CD4-positive, alpha-beta T cell (primary cell): ENCODE measurements at regions of chr3 and their contacts with region 1.

Region 1: GRCh38 chr3:49802719-49803464 is at the start of gene INKA1:
- DNase-seq: peak; percentile 82 to 95 (median 84)
- ATAC-seq: peak; percentile 88
- H3K4me3 ChIP-seq: peak within 1 kb of the TSS; percentile 85
- H3K4me3 Mint-ChIP-seq: peak within 1 kb of the TSS; percentile 90
- H3K27ac ChIP-seq: peak within 1 kb of the TSS; percentile 69 to 74
- H3K27ac Mint-ChIP-seq: peak within 1 kb of the TSS; percentile 80
- H3K4me1 ChIP-seq: peaks cover 51% of the 10 kb centered on the region
- H3K4me1 Mint-ChIP-seq: peaks cover 45% of the 10 kb centered on the region
- H3K27me3 ChIP-seq: no peaks in the 10 kb centered on the region
- H3K27me3 Mint-ChIP-seq: peaks cover 4% of the 10 kb centered on the region
- CTCF ChIP-seq: peak; percentile 87
- total RNA-seq, gene INKA1: 0.85 to 0.87 TPM

Region 2: DNA sequence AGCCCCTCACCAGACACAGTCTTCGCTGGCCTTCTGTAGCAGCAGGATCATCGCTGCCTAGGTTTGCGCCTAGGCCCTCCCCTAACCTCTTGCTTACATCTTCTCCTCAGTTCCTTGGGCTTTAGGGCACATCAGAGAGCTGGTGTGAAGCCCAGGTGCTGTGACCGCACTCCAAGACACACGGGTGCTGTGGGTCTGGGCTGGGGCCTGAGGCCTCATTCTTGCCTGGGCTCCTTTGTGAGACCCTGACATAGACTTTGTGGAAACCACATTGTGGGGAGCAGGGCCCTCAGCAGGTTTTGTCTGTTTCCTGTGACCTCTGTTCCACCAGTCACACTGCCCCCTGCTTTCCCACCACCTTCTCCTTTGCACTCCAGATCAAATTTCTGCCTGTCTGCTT is 91.4 kb before region 1 on chr3:
- CTCF ChIA-PET with region 1: no interaction called
- POLR2A ChIA-PET with region 1: no interaction called
- intact Hi-C with region 1: no loop called
- DNase-seq: no peak
- ATAC-seq: no peak
- H3K4me3 ChIP-seq: no peak overlapping the region
- H3K4me3 Mint-ChIP-seq: no peak overlapping the region
- H3K27ac ChIP-seq: no peak overlapping the region
- H3K27ac Mint-ChIP-seq: peak overlapping the region; percentile 35
- H3K4me1 ChIP-seq: peaks cover 12% of the 10 kb centered on the region
- H3K4me1 Mint-ChIP-seq: no peaks in the 10 kb centered on the region
- H3K27me3 ChIP-seq: no peaks in the 10 kb centered on the region
- H3K27me3 Mint-ChIP-seq: no peaks in the 10 kb centered on the region
- CTCF ChIP-seq: no peak

Region 3: DNA sequence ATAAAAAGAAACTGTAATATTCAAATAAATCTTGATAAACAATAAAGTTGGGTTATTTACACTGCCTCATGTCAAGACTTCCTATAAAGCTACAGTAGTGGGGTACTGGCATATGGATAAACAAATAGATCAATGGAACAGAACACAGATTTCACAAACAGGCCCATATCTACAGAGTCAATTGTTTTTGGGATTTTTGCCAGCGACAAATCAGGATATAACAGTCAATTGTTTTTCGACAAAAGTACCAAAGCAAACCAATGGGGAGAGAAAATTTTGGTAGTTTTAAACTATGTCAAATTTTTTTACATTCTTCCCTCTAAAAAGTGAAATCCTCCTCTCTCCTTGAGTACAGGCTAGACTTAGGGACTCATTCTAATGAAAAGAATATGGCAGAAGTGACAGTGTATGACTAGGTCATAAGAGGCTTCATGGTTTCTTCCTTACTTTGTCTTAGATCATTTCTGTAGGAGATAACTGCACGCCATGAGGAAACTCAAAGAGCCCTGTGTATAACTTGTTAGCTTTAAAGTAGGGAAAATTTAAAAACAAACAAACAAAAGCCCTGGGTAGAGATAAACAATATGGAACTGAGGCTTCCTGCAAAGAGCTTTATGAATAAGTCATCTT is 33.5 kb before region 1 on chr3:
- CTCF ChIA-PET with region 1: interaction called, 13 read pairs
- POLR2A ChIA-PET with region 1: interaction called, 3 read pairs
- intact Hi-C with region 1: no loop called
- DNase-seq: no peak
- ATAC-seq: no peak
- H3K4me3 ChIP-seq: no peak overlapping the region
- H3K4me3 Mint-ChIP-seq: no peak overlapping the region
- H3K27ac ChIP-seq: no peak overlapping the region
- H3K27ac Mint-ChIP-seq: no peak overlapping the region
- H3K4me1 ChIP-seq: peaks cover 7% of the 10 kb centered on the region
- H3K4me1 Mint-ChIP-seq: peaks cover 38% of the 10 kb centered on the region
- H3K27me3 ChIP-seq: no peaks in the 10 kb centered on the region
- H3K27me3 Mint-ChIP-seq: no peaks in the 10 kb centered on the region
- CTCF ChIP-seq: no peak

Region 4: GRCh38 chr3:49813497-49814174 is 10.7 kb after region 1 on chr3 and contains the start of gene UBA7:
- CTCF ChIA-PET with region 1: interaction called, 42 read pairs
- POLR2A ChIA-PET with region 1: interaction called, 83 read pairs
- intact Hi-C with region 1: loop called in 1 of 2 experiments (anchors 1 kb)
- DNase-seq: peak in 9 of 14 experiments; percentile 11 to 76 (median 52)
- ATAC-seq: peak; percentile 88
- H3K4me3 ChIP-seq: peak within 1 kb of the TSS; percentile 77
- H3K4me3 Mint-ChIP-seq: peak within 1 kb of the TSS; percentile 97
- H3K27ac ChIP-seq: peak within 1 kb of the TSS; percentile 41 to 71
- H3K27ac Mint-ChIP-seq: peak within 1 kb of the TSS; percentile 97
- H3K4me1 ChIP-seq: peaks cover 37% of the 10 kb centered on the region
- H3K4me1 Mint-ChIP-seq: peaks cover 36% of the 10 kb centered on the region
- H3K27me3 ChIP-seq: no peaks in the 10 kb centered on the region
- H3K27me3 Mint-ChIP-seq: no peaks in the 10 kb centered on the region
- CTCF ChIP-seq: no peak
- total RNA-seq, gene UBA7: 208 to 213 TPM

Region 5: DNA sequence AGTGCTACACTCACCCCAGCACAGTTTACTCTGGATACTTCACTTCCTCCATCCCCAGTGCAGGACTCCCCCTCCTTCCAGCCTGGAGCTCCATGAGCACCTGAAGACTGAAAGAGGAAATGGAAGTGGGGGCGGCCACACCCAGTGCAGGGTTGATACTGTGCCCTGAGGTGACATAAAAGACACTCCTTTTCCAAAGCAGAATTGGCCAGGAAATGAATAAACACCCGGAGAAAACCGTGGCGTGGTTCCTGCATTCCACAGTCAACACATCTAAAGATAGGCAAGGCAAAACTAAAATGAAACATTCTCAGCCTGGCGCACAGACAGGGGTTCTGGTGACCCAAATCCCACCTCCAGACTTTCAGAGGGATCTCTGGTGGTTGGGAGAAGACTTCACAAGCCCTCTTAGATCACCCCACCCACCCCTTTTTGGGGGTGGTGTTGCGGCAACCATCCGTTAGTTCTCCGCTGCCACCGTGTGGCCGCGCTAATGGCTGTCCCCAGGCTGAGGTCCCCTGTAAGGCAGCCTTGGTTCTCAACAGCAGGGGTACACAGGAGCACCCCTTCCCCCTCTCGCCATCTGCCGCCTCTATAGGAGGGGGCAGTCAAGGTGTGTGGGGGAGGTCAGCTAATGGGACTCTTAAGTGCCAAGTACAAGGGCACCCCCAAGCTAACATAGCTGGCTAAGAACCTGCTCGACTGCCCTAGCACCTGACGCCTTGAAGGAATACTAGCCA is 103.3 kb after region 1 on chr3:
- CTCF ChIA-PET with region 1: interaction called, 8 read pairs
- POLR2A ChIA-PET with region 1: interaction called, 6 read pairs
- intact Hi-C with region 1: loop called (anchors 1 kb)
- DNase-seq: peak; percentile 15 to 77 (median 40)
- ATAC-seq: peak; percentile 43
- H3K4me3 ChIP-seq: no peak overlapping the region
- H3K4me3 Mint-ChIP-seq: peak overlapping the region; percentile 75
- H3K27ac ChIP-seq: peak overlapping the region in 1 of 2 donors; percentile 32
- H3K27ac Mint-ChIP-seq: peak overlapping the region; percentile 85
- H3K4me1 ChIP-seq: peaks cover 39% of the 10 kb centered on the region
- H3K4me1 Mint-ChIP-seq: peaks cover 33% of the 10 kb centered on the region
- H3K27me3 ChIP-seq: no peaks in the 10 kb centered on the region
- H3K27me3 Mint-ChIP-seq: no peaks in the 10 kb centered on the region
- CTCF ChIP-seq: peak; percentile 57

Region 6: GRCh38 chr3:49939858-49940666 is 137.2 kb after region 1 on chr3 and contains the start of gene RBM6:
- CTCF ChIA-PET with region 1: interaction called, 5 read pairs
- POLR2A ChIA-PET with region 1: interaction called, 11 read pairs
- intact Hi-C with region 1: no loop called
- DNase-seq: peak; percentile 86 to 98 (median 92)
- ATAC-seq: peak; percentile 97
- H3K4me3 ChIP-seq: peak within 1 kb of the TSS; percentile 88
- H3K4me3 Mint-ChIP-seq: peak within 1 kb of the TSS; percentile 95
- H3K27ac ChIP-seq: peak within 1 kb of the TSS; percentile 96 to 98
- H3K27ac Mint-ChIP-seq: peak within 1 kb of the TSS; percentile 97
- H3K4me1 ChIP-seq: peaks cover 26% of the 10 kb centered on the region
- H3K4me1 Mint-ChIP-seq: peaks cover 34% of the 10 kb centered on the region
- H3K27me3 ChIP-seq: no peaks in the 10 kb centered on the region
- H3K27me3 Mint-ChIP-seq: no peaks in the 10 kb centered on the region
- CTCF ChIP-seq: no peak
- total RNA-seq, gene RBM6: 99.3 to 106 TPM

Region 7: GRCh38 chr3:50126287-50127211 is 323.7 kb after region 1 on chr3:
- CTCF ChIA-PET with region 1: no interaction called
- POLR2A ChIA-PET with region 1: no interaction called
- intact Hi-C with region 1: no loop called
- DNase-seq: peak in 1 of 14 experiments; percentile 22
- ATAC-seq: no peak
- H3K4me3 ChIP-seq: no peak overlapping the region
- H3K4me3 Mint-ChIP-seq: no peak overlapping the region
- H3K27ac ChIP-seq: no peak overlapping the region
- H3K27ac Mint-ChIP-seq: no peak overlapping the region
- H3K4me1 ChIP-seq: peaks cover 3% of the 10 kb centered on the region
- H3K4me1 Mint-ChIP-seq: peaks cover 1% of the 10 kb centered on the region
- H3K27me3 ChIP-seq: no peaks in the 10 kb centered on the region
- H3K27me3 Mint-ChIP-seq: no peaks in the 10 kb centered on the region
- CTCF ChIP-seq: no peak